ENCODE measurements at regions of chr22 and their contacts with region 1.

Region 1: GRCh38 chr22:33984656-33985285 is 64.5 kb upstream of the LARGE1 start:
- DNase-seq: no peak
- H3K4me3 Mint-ChIP-seq: no peak overlapping the region
- H3K27ac Mint-ChIP-seq: no peak overlapping the region
- H3K4me1 Mint-ChIP-seq: no peaks in the 10 kb centered on the region
- H3K27me3 Mint-ChIP-seq: no peaks in the 10 kb centered on the region
- CTCF ChIP-seq: no peak

Region 2: GRCh38 chr22:33823552-33823951 is 161.2 kb before region 1 on chr22:
- CTCF ChIA-PET with region 1: no interaction called
- intact Hi-C with region 1: no loop called
- DNase-seq: no peak
- H3K4me3 Mint-ChIP-seq: no peak overlapping the region
- H3K27ac Mint-ChIP-seq: no peak overlapping the region
- H3K4me1 Mint-ChIP-seq: no peaks in the 10 kb centered on the region
- H3K27me3 Mint-ChIP-seq: no peaks in the 10 kb centered on the region
- CTCF ChIP-seq: no peak

Region 3: GRCh38 chr22:34035209-34035608 is 50.4 kb after region 1 on chr22:
- CTCF ChIA-PET with region 1: no interaction called
- intact Hi-C with region 1: loop called (anchors 1 kb)
- DNase-seq: no peak
- H3K4me3 Mint-ChIP-seq: no peak overlapping the region
- H3K27ac Mint-ChIP-seq: no peak overlapping the region
- H3K4me1 Mint-ChIP-seq: no peaks in the 10 kb centered on the region
- H3K27me3 Mint-ChIP-seq: no peaks in the 10 kb centered on the region
- CTCF ChIP-seq: no peak